Dendritic cell treated with granulocyte-macrophage colony-stimulating factor and Interleukin-4, amounts not matched to agents 40 ng/mL and 50 ng/mL, for 4 days (primary cell): ENCODE measurements at regions of chr6 and their contacts with region 1.

Region 1: DNA sequence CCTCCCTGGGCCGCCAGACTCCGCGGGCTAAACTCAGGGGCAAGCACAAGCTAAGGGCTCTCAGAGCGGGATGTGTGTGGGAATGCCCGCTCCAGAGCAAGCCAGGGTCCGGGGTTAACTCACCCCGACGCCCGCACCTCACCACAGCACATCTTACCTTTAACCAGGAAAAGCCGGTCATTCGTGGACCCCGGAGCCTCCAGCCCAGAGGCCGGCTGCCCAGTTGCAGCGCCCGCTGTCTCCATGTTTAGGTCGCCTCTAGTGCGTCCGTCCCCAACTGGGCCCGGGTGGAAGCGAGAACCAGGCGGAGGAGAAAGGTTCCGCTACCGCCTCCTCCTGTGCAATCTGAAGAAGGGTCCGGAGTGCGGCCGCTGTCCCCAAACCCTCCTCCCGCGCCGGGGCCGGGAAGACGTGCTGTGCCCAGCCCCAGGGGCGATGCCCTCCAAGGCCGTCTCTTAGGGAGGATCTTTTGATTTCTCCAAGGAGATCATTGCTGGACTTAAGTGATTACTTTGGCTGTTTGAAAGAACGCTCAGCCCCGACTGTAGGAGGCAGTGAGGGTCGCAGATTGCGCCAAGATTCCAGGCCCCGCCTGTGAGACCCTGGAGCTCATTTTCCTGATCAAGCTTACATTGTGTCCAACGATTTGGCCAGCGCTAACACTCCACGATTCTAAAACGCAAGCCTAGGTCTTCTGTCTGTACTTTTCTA is at the start of gene TMEM242:
- H3K4me3 Mint-ChIP-seq: peak within 1 kb of the TSS; percentile 96
- H3K27ac Mint-ChIP-seq: peak within 1 kb of the TSS; percentile 99
- H3K4me1 Mint-ChIP-seq: peaks cover 8% of the 10 kb centered on the region
- H3K27me3 Mint-ChIP-seq: peaks cover 13% of the 10 kb centered on the region

Region 2: DNA sequence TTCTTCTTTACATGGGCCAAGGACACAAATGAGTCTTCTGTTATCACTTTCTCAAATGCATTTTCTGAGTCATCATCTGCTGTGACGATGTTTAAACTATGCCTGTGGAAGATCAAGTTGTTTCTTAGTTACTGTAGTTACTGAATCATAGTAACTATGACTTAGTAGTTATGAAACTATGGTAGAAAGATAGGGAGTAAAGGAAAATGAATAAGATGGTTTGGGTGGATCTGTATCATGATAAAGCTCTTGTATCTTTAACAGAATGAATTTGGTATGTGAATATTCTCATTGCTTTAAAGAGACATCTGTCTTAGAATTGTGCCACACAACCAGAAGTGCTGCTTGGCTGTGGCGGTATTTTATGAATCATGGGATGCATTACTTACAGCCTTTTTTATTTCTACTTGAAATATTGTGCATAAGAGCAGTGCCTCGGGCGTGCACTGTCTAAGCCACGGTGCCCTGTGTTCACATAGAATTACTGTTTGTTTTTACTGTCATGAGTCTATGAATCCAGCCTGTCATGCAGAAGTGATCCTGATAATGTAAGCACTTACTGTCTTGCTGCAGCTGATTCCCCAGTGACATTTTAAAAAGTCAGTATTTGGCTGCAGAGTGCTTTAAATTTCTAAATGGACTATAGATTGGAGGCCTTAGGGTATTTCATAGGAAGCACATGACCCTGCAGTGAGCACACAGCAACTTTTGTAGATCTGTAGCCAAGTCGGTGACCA is 215.3 kb before region 1 on chr6:
- intact Hi-C with region 1: no loop called
- H3K4me3 Mint-ChIP-seq: no peak overlapping the region
- H3K27ac Mint-ChIP-seq: peak overlapping the region; percentile 8
- H3K4me1 Mint-ChIP-seq: peaks cover 36% of the 10 kb centered on the region
- H3K27me3 Mint-ChIP-seq: no peaks in the 10 kb centered on the region

Region 3: GRCh38 chr6:157379656-157380454 is 56.4 kb after region 1 on chr6:
- intact Hi-C with region 1: loop called (anchors 2 kb)
- H3K4me3 Mint-ChIP-seq: peak overlapping the region; percentile 84
- H3K27ac Mint-ChIP-seq: peak overlapping the region; percentile 83
- H3K4me1 Mint-ChIP-seq: peaks cover 25% of the 10 kb centered on the region
- H3K27me3 Mint-ChIP-seq: peaks cover 16% of the 10 kb centered on the region

Region 4: GRCh38 chr6:157563611-157564284 is 240.3 kb after region 1 on chr6:
- intact Hi-C with region 1: no loop called
- H3K4me3 Mint-ChIP-seq: no peak overlapping the region
- H3K27ac Mint-ChIP-seq: no peak overlapping the region
- H3K4me1 Mint-ChIP-seq: peaks cover 13% of the 10 kb centered on the region
- H3K27me3 Mint-ChIP-seq: peaks cover 7% of the 10 kb centered on the region